Endothelial cell of umbilical vein (primary cell): ENCODE measurements at regions of chr1 and their contacts with region 1.

Region 1: GRCh38 chr1:68120136-68120791 is 69.8 kb upstream of the DIRAS3 start:
- DNase-seq: peak; percentile 85
- H3K4me3 ChIP-seq: no peak overlapping the region
- H3K27ac ChIP-seq: no peak overlapping the region
- H3K4me1 ChIP-seq: peaks cover 5% of the 10 kb centered on the region
- H3K27me3 ChIP-seq: no peaks in the 10 kb centered on the region
- CTCF ChIP-seq: peak; percentile 59 to 71
- POLR2A ChIP-seq: peak; percentile 26

Region 2: GRCh38 chr1:68269637-68270426 is 149.6 kb after region 1 on chr1:
- CTCF ChIA-PET with region 1: interaction called, 4 read pairs
- POLR2A ChIA-PET with region 1: interaction called, 13 read pairs
- dilution Hi-C with region 1: no loop called
- intact Hi-C with region 1: no loop called
- DNase-seq: no peak
- H3K4me3 ChIP-seq: no peak overlapping the region
- H3K27ac ChIP-seq: no peak overlapping the region
- H3K4me1 ChIP-seq: no peaks in the 10 kb centered on the region
- H3K27me3 ChIP-seq: no peaks in the 10 kb centered on the region
- CTCF ChIP-seq: no peak
- POLR2A ChIP-seq: no peak

Region 3: DNA sequence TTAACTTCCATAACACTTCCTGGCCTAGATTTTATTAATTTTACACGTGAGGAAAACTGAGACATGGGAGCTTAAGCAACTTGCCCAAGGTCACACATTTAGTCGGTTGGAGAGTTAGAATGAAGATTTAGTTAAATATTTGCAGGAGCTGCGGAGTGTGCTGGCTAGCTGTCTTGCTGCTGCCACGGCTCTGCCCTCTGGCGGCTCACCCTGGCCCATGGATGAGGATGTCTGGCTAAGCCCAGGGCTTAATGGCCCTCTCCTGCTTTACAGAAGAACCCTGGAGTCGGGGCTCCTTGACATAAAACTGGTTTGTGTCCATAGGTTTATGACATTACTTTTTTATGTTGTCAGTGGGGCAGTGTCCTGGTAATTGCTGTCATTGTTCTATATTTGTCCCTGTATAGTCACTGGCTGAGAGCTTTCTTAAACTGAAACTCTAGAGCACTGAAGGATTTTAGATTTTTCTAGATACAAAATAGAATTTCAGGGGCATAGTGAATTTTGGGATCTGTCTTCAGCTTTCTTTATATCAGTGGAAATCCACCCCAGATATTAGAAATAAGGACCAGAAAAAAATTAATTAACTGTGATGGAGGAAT is 200.9 kb after region 1 on chr1:
- CTCF ChIA-PET with region 1: interaction called, 267 read pairs
- POLR2A ChIA-PET with region 1: no interaction called
- dilution Hi-C with region 1: loop called (anchors 25 kb)
- intact Hi-C with region 1: loop called (anchors 1 kb)
- DNase-seq: peak; percentile 70
- H3K4me3 ChIP-seq: no peak overlapping the region
- H3K27ac ChIP-seq: no peak overlapping the region
- H3K4me1 ChIP-seq: no peaks in the 10 kb centered on the region
- H3K27me3 ChIP-seq: no peaks in the 10 kb centered on the region
- CTCF ChIP-seq: peak; percentile 72 to 88
- POLR2A ChIP-seq: no peak

Region 4: GRCh38 chr1:68346188-68346808 is 226.0 kb after region 1 on chr1:
- CTCF ChIA-PET with region 1: interaction called, 312 read pairs
- POLR2A ChIA-PET with region 1: interaction called, 5 read pairs
- dilution Hi-C with region 1: loop called (anchors 25 kb)
- intact Hi-C with region 1: loop called (anchors 1 kb)
- DNase-seq: peak; percentile 68
- H3K4me3 ChIP-seq: no peak overlapping the region
- H3K27ac ChIP-seq: no peak overlapping the region
- H3K4me1 ChIP-seq: no peaks in the 10 kb centered on the region
- H3K27me3 ChIP-seq: no peaks in the 10 kb centered on the region
- CTCF ChIP-seq: peak; percentile 37 to 39
- POLR2A ChIP-seq: no peak

Region 5: DNA sequence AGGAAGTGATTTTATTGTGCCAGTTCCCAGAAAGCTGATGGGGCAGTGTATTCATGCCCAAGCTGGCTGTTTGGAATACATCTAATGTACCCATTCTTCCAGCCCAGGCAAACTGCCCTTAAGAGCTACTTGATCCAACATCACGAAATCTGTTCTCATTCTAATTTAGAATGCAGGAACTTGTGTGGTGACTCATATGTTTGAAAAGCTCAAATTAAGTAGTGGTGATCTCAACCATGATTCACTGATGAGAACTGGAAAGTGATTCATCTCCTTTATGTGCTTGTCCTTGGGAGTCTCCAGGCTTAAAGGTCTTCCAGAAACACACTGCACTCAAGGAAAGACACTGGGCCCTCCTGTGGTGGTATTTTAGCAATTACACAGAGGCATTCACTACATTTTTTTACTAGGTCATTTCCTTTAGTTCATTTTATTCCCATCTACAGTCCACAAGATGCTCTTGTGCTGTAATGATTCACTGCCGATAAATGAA is 264.1 kb after region 1 on chr1:
- CTCF ChIA-PET with region 1: interaction called, 20 read pairs
- POLR2A ChIA-PET with region 1: no interaction called
- dilution Hi-C with region 1: no loop called
- intact Hi-C with region 1: loop called (anchors 1 kb)
- DNase-seq: peak; percentile 98
- H3K4me3 ChIP-seq: peak overlapping the region in 1 of 3 experiments; percentile 18
- H3K27ac ChIP-seq: peak overlapping the region; percentile 97
- H3K4me1 ChIP-seq: peaks cover 30% of the 10 kb centered on the region
- H3K27me3 ChIP-seq: no peaks in the 10 kb centered on the region
- CTCF ChIP-seq: peak; percentile 32 to 35
- POLR2A ChIP-seq: no peak

Region 6: GRCh38 chr1:68644521-68644920 is 524.3 kb after region 1 on chr1:
- CTCF ChIA-PET with region 1: no interaction called
- POLR2A ChIA-PET with region 1: no interaction called
- dilution Hi-C with region 1: no loop called
- intact Hi-C with region 1: no loop called
- DNase-seq: no peak
- H3K4me3 ChIP-seq: no peak overlapping the region
- H3K27ac ChIP-seq: no peak overlapping the region
- H3K4me1 ChIP-seq: no peaks in the 10 kb centered on the region
- H3K27me3 ChIP-seq: no peaks in the 10 kb centered on the region
- CTCF ChIP-seq: no peak
- POLR2A ChIP-seq: no peak